ENCODE measurements at regions of chr19 and their contacts with region 1.

Region 1: GRCh38 chr19:46687438-46688145 is 26.6 kb upstream of the DACT3 start:
- DNase-seq: no peak
- ATAC-seq: no peak
- H3K4me3 ChIP-seq: no peak overlapping the region
- H3K27ac ChIP-seq: no peak overlapping the region
- H3K4me1 ChIP-seq: no peaks in the 10 kb centered on the region
- H3K27me3 ChIP-seq: no peaks in the 10 kb centered on the region
- CTCF ChIP-seq: no peak
- EP300 ChIP-seq: no peak
- POLR2A ChIP-seq: no peak
- RAD21 ChIP-seq: no peak

Region 2: GRCh38 chr19:46503848-46504453 is 183.6 kb before region 1 on chr19:
- CTCF ChIA-PET with region 1: no interaction called
- POLR2A ChIA-PET with region 1: no interaction called
- RAD21 ChIA-PET with region 1: no interaction called
- SMC1A ChIA-PET with region 1: no interaction called
- in situ Hi-C with region 1: no loop called
- intact Hi-C with region 1: no loop called
- DNase-seq: no peak
- ATAC-seq: no peak
- H3K4me3 ChIP-seq: no peak overlapping the region
- H3K27ac ChIP-seq: no peak overlapping the region
- H3K4me1 ChIP-seq: no peaks in the 10 kb centered on the region; the same call in 1 of the 2 replicates
- H3K27me3 ChIP-seq: no peaks in the 10 kb centered on the region
- CTCF ChIP-seq: no peak
- EP300 ChIP-seq: no peak
- POLR2A ChIP-seq: no peak
- RAD21 ChIP-seq: no peak

Region 3: DNA sequence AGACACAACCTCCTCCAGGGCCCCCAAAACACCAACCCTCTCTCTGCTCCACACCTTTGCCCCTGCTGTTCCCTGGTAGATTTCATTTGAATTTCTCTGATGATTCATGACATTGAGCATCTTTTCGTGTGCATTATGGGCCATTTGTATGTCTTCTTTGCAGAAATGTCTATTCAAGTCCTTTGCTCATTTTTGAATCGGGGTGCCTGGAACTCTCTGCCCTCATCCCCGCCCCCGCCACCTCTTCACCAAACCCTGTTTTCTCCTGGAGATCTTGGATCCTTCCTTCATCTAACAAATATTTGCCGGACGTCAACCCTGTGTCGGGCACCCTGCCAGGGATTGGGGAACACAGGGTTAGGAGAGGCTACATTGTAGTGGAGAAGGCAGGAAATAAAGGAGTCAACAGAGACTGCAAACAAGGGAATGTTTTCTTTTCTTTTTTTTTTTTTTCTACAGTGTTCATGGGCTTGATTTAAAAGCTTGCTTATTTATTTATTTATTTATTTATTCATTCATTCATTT is 126.3 kb after region 1 on chr19:
- CTCF ChIA-PET with region 1: no interaction called
- POLR2A ChIA-PET with region 1: interaction called, 11 read pairs
- RAD21 ChIA-PET with region 1: no interaction called
- SMC1A ChIA-PET with region 1: no interaction called
- in situ Hi-C with region 1: no loop called
- intact Hi-C with region 1: no loop called
- DNase-seq: no peak
- ATAC-seq: no peak
- H3K4me3 ChIP-seq: no peak overlapping the region
- H3K27ac ChIP-seq: no peak overlapping the region
- H3K4me1 ChIP-seq: no peaks in the 10 kb centered on the region
- H3K27me3 ChIP-seq: no peaks in the 10 kb centered on the region
- CTCF ChIP-seq: no peak
- EP300 ChIP-seq: no peak
- POLR2A ChIP-seq: no peak
- RAD21 ChIP-seq: no peak